Left ventricle myocardium superior (tissue), 1 donor: ENCODE measurements at regions of chr21 and their contacts with region 1.

Region 1: DNA sequence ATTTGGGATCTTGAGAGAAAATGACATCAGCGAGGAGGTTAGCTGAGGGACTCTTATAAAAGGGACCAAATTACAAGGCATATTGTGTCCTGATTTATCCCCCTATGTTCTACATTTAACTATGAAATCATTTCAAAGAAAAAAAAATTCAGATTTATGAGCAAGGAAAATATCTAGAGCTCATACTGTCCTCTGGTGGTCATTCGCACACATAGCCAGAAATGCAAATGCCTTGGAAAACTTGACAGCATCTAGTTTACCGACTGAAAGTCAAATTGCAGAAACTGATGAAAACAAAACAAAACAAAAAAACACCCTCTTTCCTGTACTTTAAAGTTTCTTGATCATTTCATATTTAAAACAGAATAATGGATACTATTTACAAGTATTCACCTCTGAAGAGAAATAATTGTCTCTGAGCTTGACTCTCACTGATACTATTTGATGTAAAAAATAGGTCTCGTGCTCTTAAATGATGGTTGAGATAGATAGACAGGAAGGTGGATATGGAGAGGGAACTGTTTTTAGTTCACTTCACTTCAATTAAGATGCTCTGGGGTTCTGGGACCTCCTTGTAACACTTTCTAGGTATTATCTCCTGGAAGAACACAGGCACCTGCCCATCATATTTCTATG is 253.8 kb downstream of the PCP4 start:
- DNase-seq: no peak
- ATAC-seq: no peak

Region 2: DNA sequence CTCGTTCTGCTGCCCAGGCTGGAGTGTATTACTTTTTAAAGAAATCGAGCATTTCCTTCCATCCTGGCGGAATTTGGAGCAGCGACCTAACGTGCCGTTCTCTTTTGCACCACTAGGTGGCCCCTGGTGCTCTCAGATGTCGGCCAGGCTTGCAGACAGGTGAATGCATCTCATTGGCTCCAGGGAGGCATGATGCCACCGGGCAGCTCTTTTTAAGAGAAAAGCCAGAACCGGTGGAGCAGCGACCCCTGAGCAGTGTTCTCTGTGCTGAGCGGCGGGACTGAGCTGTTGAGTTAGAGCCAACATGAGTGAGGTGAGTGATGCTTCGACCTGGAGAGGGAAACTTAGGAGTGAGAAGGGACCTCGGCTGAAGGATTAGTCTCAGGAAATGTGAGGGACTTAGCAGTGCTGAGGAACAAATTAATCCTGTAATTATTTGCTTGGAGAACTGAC is 253.8 kb before region 1 on chr21 and contains the start of gene PCP4:
- intact Hi-C with region 1: loop called (anchors 10 kb)
- DNase-seq: peak; percentile 38
- ATAC-seq: no peak
- total RNA-seq, gene PCP4: 5.5 TPM

Region 3: DNA sequence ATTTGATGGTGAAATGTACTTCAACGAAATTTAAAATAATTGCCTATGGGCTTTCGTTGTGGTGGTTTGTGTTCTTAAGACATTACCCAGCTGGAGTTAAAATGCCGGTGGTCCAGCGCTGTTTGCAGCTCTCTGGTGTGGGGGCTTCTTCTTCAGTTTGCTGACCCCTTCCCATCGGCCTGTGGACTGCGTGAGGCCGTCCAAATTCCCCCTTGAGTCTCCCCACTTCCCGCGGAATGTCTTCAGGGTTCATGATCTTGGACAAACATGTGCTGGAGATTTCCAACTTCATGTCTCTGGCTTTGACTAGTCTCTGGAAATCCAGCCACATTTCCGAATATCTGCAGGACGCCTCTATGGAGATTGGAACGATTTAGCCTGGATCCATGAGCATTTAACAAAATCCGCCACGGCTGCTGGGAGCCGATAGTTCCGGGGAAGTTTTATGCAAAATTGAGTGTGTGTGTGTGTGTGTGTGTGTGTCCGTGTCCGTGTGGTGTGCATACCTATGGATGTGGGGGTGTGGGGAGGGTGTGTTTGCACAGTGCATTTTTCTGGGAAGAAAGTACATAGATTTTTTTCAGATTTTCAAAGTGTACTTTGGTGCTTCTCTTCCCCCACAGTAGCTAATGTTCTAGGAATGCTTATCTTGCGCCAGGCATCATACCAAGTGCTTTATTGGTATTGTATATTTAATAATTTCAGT is 136.6 kb before region 1 on chr21:
- intact Hi-C with region 1: no loop called
- DNase-seq: no peak
- ATAC-seq: no peak

Region 4: GRCh38 chr21:40060083-40061032 is 60.7 kb before region 1 on chr21:
- intact Hi-C with region 1: no loop called
- DNase-seq: no peak
- ATAC-seq: no peak

Region 5: GRCh38 chr21:40146216-40146837 is 25.3 kb after region 1 on chr21:
- intact Hi-C with region 1: no loop called
- DNase-seq: no peak
- ATAC-seq: no peak